ENCODE measurements at regions of chr1 and their contacts with region 1.

Region 1: GRCh38 chr1:220776720-220777326 is 9.9 kb upstream of the MTARC1 start:
- H3K4me3 ChIP-seq: no peak overlapping the region
- H3K27ac ChIP-seq: no peak overlapping the region
- H3K4me1 ChIP-seq: no peaks in the 10 kb centered on the region
- CTCF ChIP-seq: peak; percentile 70

Region 2: DNA sequence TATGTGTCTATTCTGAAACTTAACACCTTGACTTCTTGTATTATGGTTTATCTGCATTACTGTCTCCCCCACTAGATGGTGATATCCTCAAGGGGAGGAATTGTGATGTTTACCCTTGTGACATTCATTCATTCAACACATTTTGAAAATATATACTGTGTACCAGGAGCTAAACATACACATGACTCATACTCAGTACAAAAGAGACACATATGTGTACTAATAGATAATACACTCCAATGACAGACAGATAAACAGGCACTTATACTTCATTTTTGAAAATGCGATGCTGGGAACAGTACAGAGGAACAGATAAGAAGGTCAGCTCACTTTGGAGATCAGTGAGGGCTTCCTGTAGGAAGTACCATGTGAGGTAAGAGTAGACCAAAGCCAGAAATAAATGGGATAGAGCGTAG is 495.7 kb before region 1 on chr1:
- CTCF ChIA-PET with region 1: interaction called, 30 read pairs
- POLR2A ChIA-PET with region 1: no interaction called
- H3K4me3 ChIP-seq: no peak overlapping the region
- H3K27ac ChIP-seq: no peak overlapping the region
- H3K4me1 ChIP-seq: no peaks in the 10 kb centered on the region
- CTCF ChIP-seq: peak; percentile 74

Region 3: GRCh38 chr1:220680085-220680687 is 96.6 kb before region 1 on chr1:
- CTCF ChIA-PET with region 1: interaction called, 12 read pairs
- POLR2A ChIA-PET with region 1: no interaction called
- H3K4me3 ChIP-seq: no peak overlapping the region
- H3K27ac ChIP-seq: no peak overlapping the region
- H3K4me1 ChIP-seq: no peaks in the 10 kb centered on the region
- CTCF ChIP-seq: no peak

Region 4: GRCh38 chr1:220748089-220748934 is 28.5 kb before region 1 on chr1 and contains the start of gene MTARC2:
- CTCF ChIA-PET with region 1: interaction called, 12 read pairs
- POLR2A ChIA-PET with region 1: no interaction called
- H3K4me3 ChIP-seq: peak within 1 kb of the TSS; percentile 71
- H3K27ac ChIP-seq: peak within 1 kb of the TSS; percentile 86
- H3K4me1 ChIP-seq: 0 out of 2 replicates have a peak, but pooled peaks cover 10% of the 10 kb centered on the region
- CTCF ChIP-seq: no peak

Region 5: DNA sequence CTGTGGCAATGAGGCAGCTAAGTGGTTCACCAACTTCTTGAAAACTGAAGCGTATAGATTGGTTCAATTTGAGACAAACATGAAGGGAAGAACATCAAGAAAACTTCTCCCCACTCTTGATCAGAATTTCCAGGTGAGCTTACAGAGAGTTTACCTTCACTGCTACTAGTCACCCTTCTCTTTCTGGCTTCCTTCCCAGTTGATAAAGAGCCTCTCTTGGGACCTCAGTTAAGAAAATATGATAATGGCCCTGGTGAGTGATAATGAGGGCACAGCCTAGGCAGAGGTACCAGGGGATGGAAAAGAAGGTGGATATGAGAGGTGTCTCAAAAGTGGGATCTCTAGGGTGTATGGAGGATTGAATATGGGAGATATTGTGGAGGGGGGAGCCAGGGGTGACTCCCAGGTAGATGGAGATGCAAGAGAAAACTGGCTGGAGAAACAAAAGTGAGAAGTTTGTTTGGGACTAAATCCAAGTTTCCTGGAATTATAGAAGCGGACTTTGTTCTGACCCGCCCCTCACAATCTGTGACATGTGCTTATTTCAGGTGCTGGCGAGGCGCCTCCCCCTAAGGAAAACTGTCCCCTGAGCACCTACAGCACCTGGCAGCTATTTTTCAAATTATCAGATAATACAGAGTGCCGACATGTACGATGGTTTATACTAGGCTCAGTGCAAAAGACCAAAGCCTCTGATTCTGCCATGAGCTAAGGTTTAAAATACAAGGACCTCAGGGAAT is 15.0 kb before region 1 on chr1:
- CTCF ChIA-PET with region 1: interaction called, 29 read pairs
- POLR2A ChIA-PET with region 1: no interaction called
- H3K4me3 ChIP-seq: no peak overlapping the region
- H3K27ac ChIP-seq: no peak overlapping the region
- H3K4me1 ChIP-seq: no peaks in the 10 kb centered on the region
- CTCF ChIP-seq: no peak

Region 6: GRCh38 chr1:220825819-220826551 is 49.2 kb after region 1 on chr1:
- CTCF ChIA-PET with region 1: no interaction called
- POLR2A ChIA-PET with region 1: no interaction called
- H3K4me3 ChIP-seq: no peak overlapping the region
- H3K27ac ChIP-seq: no peak overlapping the region
- H3K4me1 ChIP-seq: peaks cover 7% of the 10 kb centered on the region; the same call in 1 of the 2 replicates
- CTCF ChIP-seq: no peak